ENCODE measurements at regions of chr21 and their contacts with region 1.

Region 1: GRCh38 chr21:16563795-16564194 is 834.0 kb downstream of the USP25 start:
- DNase-seq: peak; percentile 83 to 93
- H3K4me3 ChIP-seq: no peak overlapping the region
- H3K27ac ChIP-seq: peak overlapping the region; percentile 67
- H3K4me1 ChIP-seq: peaks cover 27% of the 10 kb centered on the region
- H3K27me3 ChIP-seq: no peaks in the 10 kb centered on the region
- CTCF ChIP-seq: no peak

Region 2: GRCh38 chr21:16418642-16419041 is 145.2 kb before region 1 on chr21:
- CTCF ChIA-PET with region 1: interaction called, 12 read pairs
- POLR2A ChIA-PET with region 1: no interaction called
- intact Hi-C with region 1: no loop called
- DNase-seq: no peak
- H3K4me3 ChIP-seq: no peak overlapping the region
- H3K27ac ChIP-seq: no peak overlapping the region
- H3K4me1 ChIP-seq: peaks cover 7% of the 10 kb centered on the region; the same call in 1 of the 2 replicates
- H3K27me3 ChIP-seq: no peaks in the 10 kb centered on the region
- CTCF ChIP-seq: no peak

Region 3: GRCh38 chr21:16789636-16790035 is 225.8 kb after region 1 on chr21:
- CTCF ChIA-PET with region 1: no interaction called
- POLR2A ChIA-PET with region 1: no interaction called
- intact Hi-C with region 1: loop called (anchors 10 kb)
- DNase-seq: no peak
- H3K4me3 ChIP-seq: no peak overlapping the region
- H3K27ac ChIP-seq: no peak overlapping the region
- H3K4me1 ChIP-seq: peaks cover 2% of the 10 kb centered on the region
- H3K27me3 ChIP-seq: no peaks in the 10 kb centered on the region
- CTCF ChIP-seq: no peak

Region 4: DNA sequence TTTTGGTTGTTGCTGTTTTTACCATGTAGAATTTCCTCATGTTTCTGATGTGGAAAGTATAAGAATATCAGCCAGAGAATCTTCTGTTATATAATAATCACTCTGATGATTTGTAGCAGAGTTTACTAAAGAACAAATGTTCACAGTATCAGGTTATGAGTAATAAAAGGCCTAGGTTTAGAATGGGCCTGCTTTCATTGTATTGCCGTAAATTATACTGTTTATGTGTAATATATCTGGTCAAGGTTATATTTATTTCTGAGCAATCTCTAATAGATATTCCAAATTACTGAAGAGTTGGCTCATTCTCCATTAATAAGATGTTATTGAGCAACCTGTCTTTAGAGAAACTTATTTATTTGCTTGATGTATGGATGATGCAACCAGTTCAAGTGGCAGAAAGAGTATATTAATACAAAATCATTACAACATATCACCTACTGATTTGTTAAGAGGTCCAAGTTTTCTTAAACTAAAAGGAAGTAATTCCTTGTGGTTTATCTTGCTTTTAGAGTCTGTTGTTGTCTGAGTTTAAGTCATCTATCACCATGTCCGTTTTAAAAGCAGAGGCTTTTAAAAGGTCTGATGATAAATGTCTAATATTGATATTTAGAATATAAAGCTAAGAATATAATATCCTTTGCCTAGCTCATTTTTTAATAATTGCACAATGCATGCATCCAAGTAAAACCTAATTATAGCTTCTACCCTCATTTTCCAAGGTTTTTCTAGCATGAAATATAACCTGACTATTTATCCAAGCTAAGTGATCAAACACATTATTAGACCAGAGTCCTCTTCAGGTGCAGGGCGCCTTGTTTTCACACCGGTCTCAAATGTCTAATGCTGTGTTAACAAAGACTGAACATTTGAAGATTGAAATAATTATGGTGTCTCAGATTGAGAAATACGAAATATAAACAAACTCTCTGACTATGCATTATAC is 299.8 kb after region 1 on chr21:
- CTCF ChIA-PET with region 1: no interaction called
- POLR2A ChIA-PET with region 1: interaction called, 12 read pairs
- intact Hi-C with region 1: no loop called
- DNase-seq: peak in 1 of 2 experiments; percentile 39
- H3K4me3 ChIP-seq: no peak overlapping the region
- H3K27ac ChIP-seq: no peak overlapping the region
- H3K4me1 ChIP-seq: no peaks in the 10 kb centered on the region
- H3K27me3 ChIP-seq: no peaks in the 10 kb centered on the region
- CTCF ChIP-seq: no peak

Region 5: GRCh38 chr21:16912075-16912474 is 348.3 kb after region 1 on chr21:
- CTCF ChIA-PET with region 1: no interaction called
- POLR2A ChIA-PET with region 1: no interaction called
- intact Hi-C with region 1: loop called (anchors 5 kb)
- DNase-seq: peak; percentile 12 to 56
- H3K4me3 ChIP-seq: no peak overlapping the region
- H3K27ac ChIP-seq: no peak overlapping the region
- H3K4me1 ChIP-seq: no peaks in the 10 kb centered on the region
- H3K27me3 ChIP-seq: no peaks in the 10 kb centered on the region
- CTCF ChIP-seq: no peak

Region 6: GRCh38 chr21:17003763-17004373 is 440.1 kb after region 1 on chr21:
- CTCF ChIA-PET with region 1: interaction called, 16 read pairs
- POLR2A ChIA-PET with region 1: no interaction called
- intact Hi-C with region 1: no loop called
- DNase-seq: no peak
- H3K4me3 ChIP-seq: no peak overlapping the region
- H3K27ac ChIP-seq: no peak overlapping the region
- H3K4me1 ChIP-seq: no peaks in the 10 kb centered on the region
- H3K27me3 ChIP-seq: no peaks in the 10 kb centered on the region
- CTCF ChIP-seq: no peak

Measured in PC-9 (cell line).